ENCODE measurements at regions of chr2 and their contacts with region 1.

Region 1: DNA sequence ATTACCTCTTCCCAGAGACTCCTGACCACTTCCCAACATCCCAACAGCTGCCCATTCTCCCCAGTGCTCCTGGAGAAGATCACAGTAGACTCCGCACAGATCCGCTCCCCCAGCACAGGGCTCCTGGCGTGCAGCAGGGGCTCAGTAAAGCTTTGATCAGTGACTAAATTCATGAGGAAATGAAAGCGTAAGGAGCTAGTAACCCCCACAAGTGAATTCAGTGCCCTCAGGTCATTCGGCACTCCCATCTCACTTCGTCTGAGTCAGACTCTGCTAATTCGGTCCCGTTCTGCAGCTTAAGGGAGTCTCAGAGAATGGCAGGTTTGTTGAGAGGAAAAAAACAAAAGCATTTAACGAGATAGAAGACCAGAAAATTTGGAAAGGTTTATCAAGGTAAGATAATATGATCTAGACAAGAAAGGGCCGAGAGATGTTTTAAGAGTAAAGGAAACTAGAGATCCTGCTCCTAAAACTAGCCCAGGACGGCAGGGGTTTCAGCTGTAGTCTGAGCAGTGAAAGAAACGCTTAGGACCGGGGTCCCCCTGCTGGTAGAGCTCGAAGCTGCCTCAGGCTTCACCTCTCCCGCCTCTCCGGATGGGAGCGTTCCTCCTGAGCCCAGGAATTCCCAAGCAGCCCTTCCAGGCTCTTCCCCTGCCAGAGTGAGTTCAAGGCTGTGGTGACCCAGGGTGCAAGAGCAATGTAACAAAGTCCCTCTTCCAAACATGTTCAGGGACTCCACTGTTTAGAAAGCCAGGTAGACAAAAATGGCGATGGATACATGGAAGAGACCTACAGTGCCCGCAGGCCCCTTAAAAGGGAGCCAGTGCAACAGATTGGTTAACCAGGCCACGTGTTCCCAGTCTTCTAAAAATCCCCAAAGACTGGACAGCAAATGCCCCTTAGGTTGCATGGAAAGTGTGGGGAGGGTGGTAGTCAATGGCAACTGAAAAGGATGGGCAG is 127.3 kb downstream of the DNER start:
- DNase-seq: peak; percentile 53
- H3K4me3 Mint-ChIP-seq: no peak overlapping the region
- H3K27ac Mint-ChIP-seq: no peak overlapping the region
- H3K4me1 Mint-ChIP-seq: no peaks in the 10 kb centered on the region
- H3K27me3 Mint-ChIP-seq: peaks cover 18% of the 10 kb centered on the region

Region 2: GRCh38 chr2:229431327-229431954 is 155.6 kb before region 1 on chr2:
- CTCF ChIA-PET with region 1: no interaction called
- intact Hi-C with region 1: loop called (anchors 5 kb)
- DNase-seq: no peak
- H3K4me3 Mint-ChIP-seq: no peak overlapping the region
- H3K27ac Mint-ChIP-seq: no peak overlapping the region
- H3K4me1 Mint-ChIP-seq: no peaks in the 10 kb centered on the region
- H3K27me3 Mint-ChIP-seq: no peaks in the 10 kb centered on the region

Region 3: GRCh38 chr2:229601396-229601795 is 14.4 kb after region 1 on chr2:
- CTCF ChIA-PET with region 1: no interaction called
- intact Hi-C with region 1: no loop called
- DNase-seq: no peak
- H3K4me3 Mint-ChIP-seq: no peak overlapping the region
- H3K27ac Mint-ChIP-seq: no peak overlapping the region
- H3K4me1 Mint-ChIP-seq: no peaks in the 10 kb centered on the region
- H3K27me3 Mint-ChIP-seq: peaks cover 17% of the 10 kb centered on the region

Measured in activated naive CD4-positive, alpha-beta T cell treated with anti-CD3 and anti-CD28 coated beads for 36 hours (primary cell).